ENCODE measurements at regions of chr1 and their contacts with region 1.

Region 1: DNA sequence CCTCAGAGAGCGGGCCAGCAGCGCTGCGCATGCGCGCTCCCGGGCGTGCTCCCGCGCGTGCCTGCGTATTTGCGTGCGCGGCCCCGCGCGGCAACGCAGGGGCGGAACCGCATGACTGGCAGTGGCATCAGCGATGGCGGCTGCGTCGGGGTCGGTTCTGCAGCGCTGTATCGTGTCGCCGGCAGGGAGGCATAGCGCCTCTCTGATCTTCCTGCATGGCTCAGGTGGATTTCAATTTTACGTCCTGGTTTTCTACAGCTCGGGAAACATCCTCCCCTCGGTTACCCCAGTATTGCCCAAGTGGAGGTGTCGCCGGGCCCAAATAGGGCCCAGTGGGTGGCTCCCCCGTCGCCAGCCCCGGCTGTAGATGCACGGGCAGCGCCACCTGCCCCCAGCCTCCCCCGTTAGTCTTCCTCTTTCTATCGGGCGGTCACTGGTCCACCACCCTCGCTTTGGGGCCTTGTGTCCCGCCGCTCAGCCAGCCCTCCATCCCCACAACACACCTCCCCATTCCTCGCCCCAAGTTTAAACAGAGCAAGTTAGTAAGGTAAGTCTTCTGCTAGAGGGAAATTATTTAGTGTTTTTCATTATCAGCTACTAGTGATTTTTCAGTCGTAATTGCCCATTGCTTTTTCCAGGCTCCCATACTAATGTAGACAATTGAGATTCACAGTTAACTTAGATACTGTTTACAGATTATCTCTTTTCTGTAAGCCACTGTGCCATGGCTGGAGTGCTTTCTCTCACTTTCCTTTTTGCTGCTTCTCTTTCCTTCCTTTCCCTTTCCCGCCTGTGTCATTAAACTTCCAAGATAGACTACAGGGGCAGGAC is at the start of gene LYPLAL1:
- DNase-seq: peak; percentile 52 to 92
- H3K4me3 ChIP-seq: peak within 1 kb of the TSS; percentile 67 to 76
- H3K27ac ChIP-seq: peak within 1 kb of the TSS; percentile 86 to 93
- H3K4me1 ChIP-seq: peaks cover 0 to 7% of the 10 kb centered on the region in 2 donors
- H3K27me3 ChIP-seq: no peaks in the 10 kb centered on the region
- CTCF ChIP-seq: no peak
- total RNA-seq, gene LYPLAL1: 27.5 TPM

Region 2: GRCh38 chr1:218459878-218460711 is 713.9 kb before region 1 on chr1:
- intact Hi-C with region 1: loop called (anchors 10 kb)
- DNase-seq: peak in 1 of 2 donors; percentile 72
- H3K4me3 ChIP-seq: peak overlapping the region in 1 of 2 donors; percentile 51
- H3K27ac ChIP-seq: peak overlapping the region; percentile 77 to 83
- H3K4me1 ChIP-seq: peaks cover 11 to 41% of the 10 kb centered on the region in 2 donors
- H3K27me3 ChIP-seq: no peaks in the 10 kb centered on the region
- CTCF ChIP-seq: no peak

Region 3: DNA sequence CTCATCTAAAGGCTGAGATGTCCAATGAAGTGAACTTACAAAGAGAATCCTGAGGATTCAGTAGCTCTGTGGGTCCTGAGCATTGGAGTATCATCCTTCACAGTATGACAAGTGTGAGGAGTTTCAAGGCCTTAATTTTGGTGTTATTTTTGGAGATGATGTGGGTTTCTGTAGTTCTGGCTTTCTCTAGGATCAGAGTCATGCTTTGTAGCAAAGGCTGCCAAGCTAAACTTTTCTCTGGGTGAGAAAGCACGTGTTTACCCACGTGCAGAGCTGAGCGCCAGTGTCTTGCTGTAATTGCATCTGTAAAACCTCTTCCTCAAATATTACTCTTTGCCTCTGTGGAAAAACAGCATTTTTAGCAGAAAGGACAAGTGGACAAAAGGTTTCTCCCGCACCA is 388.0 kb before region 1 on chr1:
- intact Hi-C with region 1: no loop called
- DNase-seq: peak in 1 of 2 donors; percentile 67
- H3K4me3 ChIP-seq: no peak overlapping the region
- H3K27ac ChIP-seq: no peak overlapping the region
- H3K4me1 ChIP-seq: peaks cover 0 to 9% of the 10 kb centered on the region in 2 donors
- H3K27me3 ChIP-seq: no peaks in the 10 kb centered on the region
- CTCF ChIP-seq: no peak

Region 4: DNA sequence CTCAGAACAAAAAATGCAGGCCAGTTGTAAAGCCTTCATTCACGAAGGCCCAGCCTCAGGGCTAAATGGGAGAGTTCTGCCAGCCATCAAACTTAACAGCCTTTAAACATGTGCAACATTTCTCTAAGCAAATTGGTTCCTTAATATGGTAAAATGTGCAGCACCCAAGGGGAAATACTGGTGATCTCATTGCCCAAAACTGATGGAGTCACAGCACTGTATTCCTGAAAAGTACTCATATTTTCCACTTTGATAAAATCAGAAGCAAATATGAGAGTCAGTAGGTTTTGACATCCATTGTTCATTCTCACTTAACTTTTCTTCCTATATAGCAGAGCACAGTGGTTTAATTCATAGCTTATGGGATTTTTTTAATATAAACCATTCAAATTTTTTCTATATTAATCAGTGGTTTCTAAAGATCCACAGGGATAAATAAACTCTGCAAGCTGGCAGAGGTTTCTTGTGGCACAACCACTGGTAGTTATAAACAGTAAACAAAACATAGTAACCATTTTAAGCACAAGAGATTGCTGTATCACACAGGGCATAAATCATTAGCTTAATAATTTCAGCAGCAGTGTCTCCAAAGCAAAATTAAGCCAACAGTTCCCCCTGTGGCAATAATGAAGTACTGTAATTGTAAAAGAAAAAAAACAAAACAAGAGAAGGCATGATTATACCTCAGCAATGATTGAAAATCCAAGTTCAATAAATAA is 107.2 kb before region 1 on chr1:
- intact Hi-C with region 1: loop called (anchors 10 kb)
- DNase-seq: no peak
- H3K4me3 ChIP-seq: no peak overlapping the region
- H3K27ac ChIP-seq: peak overlapping the region; percentile 73 to 76
- H3K4me1 ChIP-seq: peaks cover 0 to 7% of the 10 kb centered on the region in 2 donors
- H3K27me3 ChIP-seq: no peaks in the 10 kb centered on the region
- CTCF ChIP-seq: peak; percentile 10 to 24 (median 21)

Region 5: GRCh38 chr1:219126377-219126776 is 47.6 kb before region 1 on chr1:
- intact Hi-C with region 1: loop called (anchors 5 kb)
- DNase-seq: no peak
- H3K4me3 ChIP-seq: peak overlapping the region in 1 of 2 donors; percentile 30
- H3K27ac ChIP-seq: peak overlapping the region; percentile 52 to 65
- H3K4me1 ChIP-seq: peaks cover 0 to 11% of the 10 kb centered on the region in 2 donors
- H3K27me3 ChIP-seq: no peaks in the 10 kb centered on the region
- CTCF ChIP-seq: no peak

Region 6: DNA sequence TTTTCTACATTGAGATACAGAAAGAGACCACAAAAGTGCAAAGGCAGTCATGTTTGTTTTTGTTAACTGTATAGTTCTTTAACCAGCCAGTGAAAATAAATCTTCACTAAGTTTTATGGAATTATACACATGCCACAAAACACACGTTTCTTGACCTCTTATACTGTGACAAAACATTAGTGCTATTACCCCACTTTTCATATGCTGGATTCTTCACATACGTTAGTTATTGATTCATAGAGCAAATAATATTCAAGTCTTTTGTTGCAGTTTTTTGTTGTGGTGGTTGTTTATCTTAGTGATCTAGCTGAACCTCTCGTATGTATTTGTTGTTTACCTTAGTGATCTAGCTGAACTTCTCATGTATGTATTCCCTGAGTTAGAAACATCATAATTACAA is 27.7 kb after region 1 on chr1:
- intact Hi-C with region 1: no loop called
- DNase-seq: no peak
- H3K4me3 ChIP-seq: no peak overlapping the region
- H3K27ac ChIP-seq: no peak overlapping the region
- H3K4me1 ChIP-seq: no peaks in the 10 kb centered on the region
- H3K27me3 ChIP-seq: no peaks in the 10 kb centered on the region
- CTCF ChIP-seq: no peak

Region 7: DNA sequence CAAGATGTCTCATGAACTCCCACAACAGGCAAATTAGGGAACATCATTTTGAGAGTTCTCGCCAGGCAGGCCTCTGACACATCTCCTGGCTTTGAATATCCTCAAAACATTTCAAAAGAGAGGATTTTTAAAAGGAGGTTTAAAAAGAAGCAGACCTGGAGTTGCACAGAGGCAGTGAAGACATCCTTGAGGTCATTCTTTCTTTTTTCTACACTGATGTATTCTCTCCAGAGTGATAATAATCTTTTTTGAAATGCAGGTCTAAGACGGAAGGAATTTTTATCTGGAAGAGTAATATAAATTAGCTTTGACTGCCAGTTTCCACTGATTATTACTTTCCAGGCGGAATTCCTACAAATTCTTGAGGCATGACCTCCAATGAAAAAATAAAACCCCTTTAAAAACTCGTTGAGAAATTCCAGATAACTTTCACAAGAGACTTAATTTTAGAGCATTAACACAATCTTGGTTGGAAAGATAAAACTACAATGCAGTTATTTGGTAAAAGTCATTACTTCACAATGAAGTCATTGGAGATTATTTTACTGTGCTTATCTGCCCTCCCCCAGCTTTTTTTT is 124.7 kb after region 1 on chr1:
- intact Hi-C with region 1: loop called (anchors 2 kb)
- DNase-seq: no peak
- H3K4me3 ChIP-seq: no peak overlapping the region
- H3K27ac ChIP-seq: peak overlapping the region; percentile 76 to 77
- H3K4me1 ChIP-seq: peaks cover 4 to 31% of the 10 kb centered on the region in 2 donors
- H3K27me3 ChIP-seq: no peaks in the 10 kb centered on the region
- CTCF ChIP-seq: no peak